CD8-positive, alpha-beta T cell (primary cell): ENCODE measurements at regions of chr4 and their contacts with region 1.

Region 1: GRCh38 chr4:125010796-125011503 is 298.4 kb upstream of the ANKRD50 start:
- DNase-seq: no peak
- ATAC-seq: no peak
- H3K4me3 ChIP-seq: no peak overlapping the region
- H3K4me3 Mint-ChIP-seq: no peak overlapping the region
- H3K27ac ChIP-seq: no peak overlapping the region
- H3K27ac Mint-ChIP-seq: no peak overlapping the region
- H3K4me1 ChIP-seq: no peaks in the 10 kb centered on the region
- H3K4me1 Mint-ChIP-seq: no peaks in the 10 kb centered on the region
- H3K27me3 ChIP-seq: no peaks in the 10 kb centered on the region
- H3K27me3 Mint-ChIP-seq: no peaks in the 10 kb centered on the region
- CTCF ChIP-seq: no peak

Region 2: DNA sequence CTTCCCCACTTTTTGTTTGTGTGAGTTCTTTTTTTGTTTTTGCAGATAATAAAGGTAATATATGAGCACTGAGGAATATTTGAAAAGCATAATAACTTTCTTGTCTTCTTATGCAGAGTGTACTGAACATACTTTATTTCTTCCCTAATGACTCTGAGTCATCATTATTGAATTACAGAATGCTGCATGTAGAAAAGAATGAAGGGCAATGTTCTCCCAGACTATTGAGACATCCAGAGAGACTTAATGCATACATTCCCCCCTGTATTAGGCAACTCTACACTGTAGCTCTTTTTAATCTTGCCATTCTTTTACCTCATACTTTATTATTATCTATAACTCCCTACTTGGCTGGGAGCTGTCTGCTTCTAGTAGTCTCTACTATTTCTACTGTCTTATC is 57.9 kb before region 1 on chr4:
- CTCF ChIA-PET with region 1: no interaction called
- POLR2A ChIA-PET with region 1: no interaction called
- intact Hi-C with region 1: loop called in 1 of 2 experiments (anchors 1 kb)
- DNase-seq: no peak
- ATAC-seq: no peak
- H3K4me3 ChIP-seq: no peak overlapping the region
- H3K4me3 Mint-ChIP-seq: no peak overlapping the region
- H3K27ac ChIP-seq: no peak overlapping the region
- H3K27ac Mint-ChIP-seq: no peak overlapping the region
- H3K4me1 ChIP-seq: no peaks in the 10 kb centered on the region
- H3K4me1 Mint-ChIP-seq: no peaks in the 10 kb centered on the region
- H3K27me3 ChIP-seq: no peaks in the 10 kb centered on the region
- H3K27me3 Mint-ChIP-seq: no peaks in the 10 kb centered on the region
- CTCF ChIP-seq: no peak